ENCODE measurements at regions of chr18 and their contacts with region 1.

Region 1: DNA sequence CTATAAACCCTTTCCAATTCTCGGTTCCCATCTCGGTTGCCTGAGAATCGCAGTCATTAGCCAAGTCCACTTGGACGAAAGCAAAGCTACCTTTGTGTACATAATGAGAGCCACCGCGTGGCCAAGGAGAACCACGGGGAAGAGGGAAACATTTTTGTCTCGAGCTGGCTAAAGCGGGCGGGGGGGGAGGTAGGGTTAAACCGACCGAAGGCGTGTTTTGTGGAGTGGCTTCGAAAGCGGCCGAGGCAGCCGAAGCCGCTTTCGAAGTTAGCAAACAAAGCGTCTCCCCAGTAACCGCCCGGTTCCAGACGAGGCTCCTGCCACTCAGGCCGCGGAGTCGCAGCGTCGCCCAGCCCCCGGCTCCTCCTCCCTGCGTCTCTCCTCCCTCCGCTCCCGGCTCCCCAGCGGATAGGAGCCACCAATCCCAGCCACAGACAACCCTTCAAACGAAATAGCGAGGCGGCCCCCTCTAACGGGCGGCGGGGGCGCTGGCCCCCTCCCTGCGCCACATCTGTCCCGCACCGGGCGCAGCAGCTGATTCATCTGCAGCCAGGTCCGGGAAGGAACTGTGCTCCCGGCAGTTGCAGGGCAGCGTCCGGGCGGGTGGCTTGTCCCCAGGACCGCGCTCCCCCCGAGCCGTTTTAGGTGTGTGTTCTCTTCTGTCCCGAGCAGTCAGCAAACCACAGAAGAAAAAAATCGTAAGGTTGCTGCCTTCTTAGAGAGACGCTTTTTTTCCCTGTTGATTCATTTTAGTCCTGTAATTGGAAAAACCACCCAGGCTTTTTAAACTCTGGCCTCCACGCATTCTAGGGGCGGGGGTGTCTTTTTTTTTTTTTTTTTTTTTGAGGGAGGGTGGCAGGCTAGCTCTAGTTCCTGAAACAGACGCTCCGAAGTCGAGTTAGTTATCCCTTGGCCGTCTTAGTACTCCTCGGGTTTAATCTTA is 1.8 kb upstream of the TGIF1 start:
- DNase-seq: peak; percentile 54 to 90 (median 84)
- H3K4me3 ChIP-seq: peak overlapping the region; percentile 41 to 87 (median 70)
- H3K27ac ChIP-seq: peak overlapping the region; percentile 83 to 99 (median 96)
- H3K27me3 ChIP-seq: peaks cover 0 to 55% (median 6%) of the 10 kb centered on the region in 45 donors
- CTCF ChIP-seq: peak in 30 of 56 donors; percentile 7 to 57 (median 27)

Region 2: GRCh38 chr18:3397071-3397745 is 51.0 kb before region 1 on chr18:
- intact Hi-C with region 1: loop called in 1 of 2 experiments (anchors 2 kb)
- DNase-seq: peak in 5 of 10 donors; percentile 10 to 67 (median 54)
- H3K4me3 ChIP-seq: peak overlapping the region in 8 of 59 donors; percentile 2 to 46 (median 17)
- H3K27ac ChIP-seq: peak overlapping the region in 58 of 59 donors; percentile 68 to 99 (median 95)
- H3K27me3 ChIP-seq: peaks cover 0 to 3% (median 0%) of the 10 kb centered on the region in 45 donors
- CTCF ChIP-seq: peak in 14 of 56 donors; percentile 3 to 38 (median 17)

Region 3: GRCh38 chr18:3525870-3526420 is 77.8 kb after region 1 on chr18:
- intact Hi-C with region 1: loop called in 1 of 2 experiments (anchors 5 kb)
- DNase-seq: peak in 9 of 10 donors; percentile 47 to 70 (median 63)
- H3K4me3 ChIP-seq: peak overlapping the region in 54 of 59 donors; percentile 0 to 66 (median 40)
- H3K27ac ChIP-seq: peak overlapping the region in 58 of 59 donors; percentile 14 to 93 (median 74)
- H3K27me3 ChIP-seq: no peaks in the 10 kb centered on the region
- CTCF ChIP-seq: peak in 8 of 56 donors; percentile 8 to 17 (median 13)

Region 4: DNA sequence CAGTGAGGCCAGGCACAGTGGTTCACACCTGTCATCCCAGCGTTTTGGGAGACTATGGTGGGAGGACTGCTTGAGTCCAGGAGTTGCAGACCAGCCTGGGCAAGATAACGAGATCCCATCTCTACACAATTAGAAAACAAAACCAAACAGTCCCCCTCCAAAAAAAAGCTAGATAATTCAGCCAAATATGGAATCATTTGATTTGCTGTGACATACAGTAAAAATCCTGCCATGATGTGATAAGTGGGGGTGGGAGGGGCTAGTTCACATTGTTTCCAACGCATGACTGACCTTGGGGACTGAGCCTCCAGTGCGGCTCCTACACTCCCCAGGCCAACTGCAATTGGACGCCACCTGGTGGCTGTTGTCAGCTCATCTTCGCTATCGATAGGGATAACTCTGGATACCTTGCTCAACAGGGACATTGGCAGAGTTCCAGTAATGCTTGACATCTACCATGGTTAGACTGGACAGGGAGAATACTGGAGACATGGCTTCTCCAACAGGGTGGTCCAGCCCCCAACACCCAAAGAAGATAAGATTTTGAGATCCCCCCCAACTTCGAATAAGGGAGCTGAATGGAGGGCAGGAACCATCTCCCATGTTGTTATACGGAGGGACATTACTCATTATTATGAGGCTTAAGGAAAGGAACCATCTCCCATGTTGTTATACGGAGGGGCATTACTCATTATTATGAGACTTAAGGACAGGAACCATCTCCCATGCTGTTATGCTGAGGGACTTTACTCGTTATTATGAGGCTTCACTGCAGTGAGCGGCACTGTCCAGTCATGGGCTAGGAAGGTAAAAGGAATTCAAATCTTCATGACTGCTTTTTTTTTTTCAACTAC is 137.7 kb after region 1 on chr18:
- intact Hi-C with region 1: loop called in 1 of 2 experiments (anchors 2 kb)
- DNase-seq: peak in 8 of 10 donors; percentile 17 to 73 (median 70)
- H3K4me3 ChIP-seq: no peak overlapping the region
- H3K27ac ChIP-seq: peak overlapping the region in 2 of 59 donors; percentile 29 to 38
- H3K27me3 ChIP-seq: no peaks in the 10 kb centered on the region
- CTCF ChIP-seq: peak; percentile 45 to 88 (median 74)

Region 5: GRCh38 chr18:3593904-3594661 is 145.9 kb after region 1 on chr18:
- intact Hi-C with region 1: loop called (anchors 2 kb)
- DNase-seq: peak; percentile 72 to 94 (median 85)
- H3K4me3 ChIP-seq: peak overlapping the region; percentile 23 to 73 (median 59)
- H3K27ac ChIP-seq: peak overlapping the region; percentile 81 to 99 (median 97)
- H3K27me3 ChIP-seq: no peaks in the 10 kb centered on the region
- CTCF ChIP-seq: peak; percentile 62 to 91 (median 83)

Region 6: DNA sequence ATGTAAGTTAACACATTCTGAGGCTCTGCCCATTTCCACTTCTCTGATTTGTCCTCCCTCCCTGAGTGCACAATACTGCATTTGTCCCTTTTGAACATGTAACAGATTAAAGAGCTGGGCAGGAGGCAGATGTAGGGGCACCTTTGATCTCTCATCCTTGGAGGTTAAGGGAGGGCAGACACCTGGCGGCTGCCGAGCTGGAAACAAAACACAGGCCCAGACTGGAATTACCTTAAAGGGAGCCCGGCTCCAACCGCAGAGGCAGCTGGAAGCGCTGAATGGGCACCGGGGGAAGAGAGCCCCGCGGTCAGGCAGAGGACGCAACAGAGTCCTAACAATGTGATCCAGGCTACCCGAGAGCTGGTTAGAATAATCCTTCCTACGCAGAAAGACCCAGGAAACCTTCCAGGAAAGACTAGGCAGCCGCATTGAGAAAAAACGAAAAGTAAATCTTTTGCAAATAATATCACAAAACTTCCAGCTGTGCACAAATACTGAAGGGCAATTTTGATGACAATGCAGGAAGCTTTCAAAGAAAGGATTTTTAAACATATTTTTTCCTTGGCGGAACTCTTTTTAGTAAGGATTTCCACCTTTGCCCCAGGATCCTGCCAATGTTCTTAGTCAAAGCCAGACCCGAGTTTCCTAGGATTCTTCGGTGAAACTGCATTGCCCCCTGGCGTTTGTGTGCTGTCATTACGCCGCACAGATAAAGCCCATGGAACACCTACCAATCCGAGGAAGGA is 217.8 kb after region 1 on chr18:
- intact Hi-C with region 1: loop called in 1 of 2 experiments (anchors 2 kb)
- DNase-seq: peak; percentile 76 to 89 (median 83)
- H3K4me3 ChIP-seq: peak overlapping the region in 57 of 59 donors; percentile 6 to 67 (median 42)
- H3K27ac ChIP-seq: peak overlapping the region in 47 of 59 donors; percentile 5 to 83 (median 55)
- H3K27me3 ChIP-seq: no peaks in the 10 kb centered on the region
- CTCF ChIP-seq: peak; percentile 90 to 99 (median 97)

Measured in dorsolateral prefrontal cortex (tissue), 120 donors.